Sciatic nerve (tissue), 2 donors: ENCODE measurements at regions of chr17 and their contacts with region 1.

Region 1: GRCh38 chr17:77208217-77208808 is 67.5 kb downstream of the SEC14L1 start:
- DNase-seq: peak; percentile 63
- ATAC-seq: peak; percentile 82

Region 2: GRCh38 chr17:77096570-77097214 is 111.6 kb before region 1 on chr17:
- intact Hi-C with region 1: loop called (anchors 10 kb)
- DNase-seq: no peak
- ATAC-seq: peak; percentile 71

Region 3: GRCh38 chr17:77153472-77153871 is 54.8 kb before region 1 on chr17:
- intact Hi-C with region 1: loop called (anchors 10 kb)
- DNase-seq: no peak
- ATAC-seq: no peak

Region 4: GRCh38 chr17:77266891-77267341 is 58.6 kb after region 1 on chr17:
- intact Hi-C with region 1: no loop called
- DNase-seq: no peak
- ATAC-seq: no peak